ENCODE measurements at regions of chr7 and their contacts with region 1.

Region 1: DNA sequence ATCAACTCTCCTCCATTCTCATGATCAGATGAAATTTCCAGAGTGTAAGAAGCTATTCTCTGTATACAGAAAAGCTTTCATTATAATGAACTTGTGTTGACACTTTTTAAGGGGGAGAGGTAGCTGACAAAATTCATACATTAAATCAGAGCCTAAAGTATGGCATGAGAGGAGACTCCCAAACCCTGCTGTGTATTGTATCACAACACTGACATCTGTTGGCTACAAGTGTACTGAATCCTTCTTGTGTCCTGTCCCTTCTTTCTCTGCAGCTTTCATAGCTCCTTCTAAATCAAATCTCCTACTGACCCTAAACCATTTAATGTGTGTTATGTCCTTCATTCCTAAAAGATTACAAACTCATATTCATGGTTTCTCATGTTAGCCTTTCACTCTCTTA is 70.9 kb downstream of the GCC1 start:
- ATAC-seq: peak in 7 of 8 experiments; percentile 43 to 82 (median 60)
- H3K4me3 ChIP-seq: no peak overlapping the region
- H3K27ac ChIP-seq: no peak overlapping the region
- H3K4me1 ChIP-seq: peaks cover 0 to 6% of the 10 kb centered on the region in 2 donors

Region 2: DNA sequence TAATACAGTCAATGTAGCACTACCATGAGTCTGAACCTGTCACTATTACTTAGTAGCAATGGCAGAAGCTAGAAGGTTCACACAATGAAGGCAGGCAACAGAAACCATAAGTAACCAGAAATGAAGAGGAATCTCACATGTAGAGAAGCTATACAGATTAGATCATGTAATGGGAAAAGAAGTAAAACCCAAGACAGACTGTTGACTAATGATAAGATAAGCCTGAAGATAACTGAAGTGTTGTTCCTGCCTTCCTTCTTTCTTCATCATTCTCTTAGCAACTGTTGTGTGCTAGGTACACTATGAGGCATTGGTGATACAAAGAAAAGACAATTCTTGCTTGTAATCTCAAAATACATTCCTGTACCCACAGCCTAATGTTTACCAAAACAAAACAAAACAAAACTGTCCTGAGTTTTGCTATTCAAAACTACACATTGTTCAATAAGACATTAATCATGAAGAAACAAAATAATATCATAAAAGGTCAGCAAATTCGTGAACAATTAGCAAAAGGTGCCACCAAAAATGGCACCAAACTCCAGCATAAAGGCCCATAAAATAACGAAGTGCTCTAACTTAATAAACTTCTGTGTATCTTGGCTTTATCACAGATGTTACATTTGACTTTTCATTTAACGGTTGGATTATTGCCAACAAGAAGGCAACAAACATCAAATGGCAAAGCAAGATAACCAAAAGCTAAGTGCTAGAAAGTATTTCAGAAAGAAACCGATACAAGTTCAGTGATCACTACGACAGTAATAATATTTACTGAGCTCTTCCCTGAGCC is 149.1 kb before region 1 on chr7:
- in situ Hi-C with region 1: loop called in 1 of 9 experiments (anchors 25 kb)
- ATAC-seq: no peak
- H3K4me3 ChIP-seq: no peak overlapping the region
- H3K27ac ChIP-seq: no peak overlapping the region
- H3K4me1 ChIP-seq: no peaks in the 10 kb centered on the region

Region 3: DNA sequence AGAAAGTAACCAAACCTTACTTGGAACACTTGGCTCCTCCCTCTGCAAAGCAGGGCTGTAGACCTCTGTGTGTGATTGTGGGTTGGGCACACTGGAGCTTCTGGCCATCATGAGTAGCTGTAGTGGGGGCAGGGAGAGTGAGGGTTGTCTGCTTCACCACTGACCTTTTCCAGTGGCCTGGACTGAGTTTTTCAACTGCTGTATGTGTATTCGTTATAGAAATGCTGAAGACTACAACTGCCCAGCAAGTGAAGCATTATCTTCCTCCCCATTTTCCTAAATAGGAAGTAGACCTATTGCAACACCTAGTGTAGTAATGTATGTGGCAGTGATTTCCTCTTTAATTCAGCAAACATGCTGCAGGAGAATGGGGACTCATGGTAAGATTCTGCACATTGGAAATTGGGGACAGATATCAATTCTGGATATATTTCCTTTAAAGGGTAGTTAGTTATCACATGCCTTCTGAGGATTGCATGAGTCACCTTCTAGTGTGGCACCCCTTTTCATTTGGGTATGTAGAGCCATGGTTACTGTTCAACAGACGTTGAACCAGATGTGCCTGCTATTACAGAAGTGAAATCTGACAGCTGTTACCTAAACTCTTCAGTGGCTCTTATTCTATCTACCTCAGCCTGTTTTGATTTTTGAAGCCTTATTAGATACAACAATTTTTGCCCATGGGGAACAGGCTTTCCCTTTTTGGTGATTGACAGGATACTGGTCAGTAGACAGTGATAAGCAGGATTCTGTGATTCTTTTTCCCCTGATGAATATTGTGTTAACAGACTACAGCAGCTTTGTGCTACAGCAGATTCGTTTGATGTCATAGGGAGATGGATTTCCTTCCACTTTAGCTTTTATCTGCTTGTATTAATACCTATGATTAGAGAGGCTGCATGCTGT is 268.4 kb after region 1 on chr7:
- in situ Hi-C with region 1: no loop called
- ATAC-seq: peak in 2 of 8 experiments; percentile 72 to 76
- H3K4me3 ChIP-seq: no peak overlapping the region
- H3K27ac ChIP-seq: no peak overlapping the region
- H3K4me1 ChIP-seq: peaks cover 0 to 3% of the 10 kb centered on the region in 2 donors

Measured in motor neuron (in vitro differentiated cells).